Endothelial cell of umbilical vein (primary cell): ENCODE measurements at regions of chr5 and their contacts with region 1.

Region 1: DNA sequence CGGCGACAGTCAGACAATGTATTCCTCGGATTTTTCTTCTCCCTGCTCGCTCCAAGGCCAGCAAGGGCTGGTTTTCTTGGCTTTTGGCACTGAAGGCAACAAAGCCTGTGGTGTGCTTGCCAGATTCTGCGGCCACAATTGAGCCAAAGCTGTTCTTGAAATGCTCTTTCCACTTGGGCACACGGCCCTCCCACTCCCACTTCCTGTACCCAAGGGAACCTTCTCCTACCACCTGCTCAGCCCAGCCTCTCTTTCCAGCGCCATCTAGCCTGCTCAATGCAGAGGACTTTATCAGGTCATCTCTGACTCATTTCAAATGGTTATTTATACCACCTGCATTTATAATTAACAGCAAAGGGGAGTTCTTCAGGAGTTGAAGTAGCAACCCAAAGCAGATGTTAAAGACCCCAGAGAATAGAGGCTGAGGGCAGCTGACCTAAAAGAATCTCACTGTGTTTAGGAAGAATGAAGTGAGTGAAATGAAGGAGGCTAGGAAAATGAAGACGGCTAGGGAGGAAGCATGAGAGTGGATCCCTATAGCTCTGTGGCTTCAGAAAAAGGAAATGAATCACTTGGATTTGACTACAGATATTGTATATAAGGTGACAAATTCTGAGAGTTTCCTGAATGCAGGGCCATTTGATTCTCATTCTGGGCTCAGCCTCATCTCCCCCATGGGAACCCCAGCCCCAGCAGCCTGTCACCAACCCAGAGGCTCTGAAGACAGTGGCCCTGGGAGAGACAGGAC is 439.0 kb downstream of the ENC1 start:
- DNase-seq: peak; percentile 85
- H3K4me3 ChIP-seq: peak overlapping the region in 1 of 3 experiments; percentile 11
- H3K27ac ChIP-seq: peak overlapping the region; percentile 49
- H3K4me1 ChIP-seq: peaks cover 25% of the 10 kb centered on the region
- H3K27me3 ChIP-seq: peaks cover 0 to 5% of the 10 kb centered on the region in 2 experiments
- CTCF ChIP-seq: no peak
- POLR2A ChIP-seq: no peak

Region 2: DNA sequence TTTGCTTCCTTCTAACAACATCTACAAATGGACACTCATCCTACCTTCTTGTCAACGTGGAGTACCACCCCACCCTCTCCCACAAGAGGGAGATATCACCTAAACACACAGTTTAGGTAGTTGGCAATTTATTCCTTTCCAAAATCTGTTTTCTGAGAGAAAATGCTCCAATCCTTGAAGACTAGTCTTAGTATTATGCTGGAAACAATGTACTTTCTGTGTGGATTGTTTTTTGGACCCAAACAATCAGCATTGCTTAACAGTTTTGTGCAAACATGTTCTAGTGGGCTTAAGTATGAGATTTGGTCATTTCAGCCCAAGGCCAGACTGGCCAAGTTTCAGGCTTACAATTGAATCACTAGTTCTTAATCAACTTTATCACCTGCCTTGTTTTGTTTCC is 216.4 kb before region 1 on chr5:
- CTCF ChIA-PET with region 1: no interaction called
- POLR2A ChIA-PET with region 1: no interaction called
- dilution Hi-C with region 1: no loop called
- intact Hi-C with region 1: loop called (anchors 5 kb)
- DNase-seq: peak; percentile 59
- H3K4me3 ChIP-seq: no peak overlapping the region
- H3K27ac ChIP-seq: no peak overlapping the region
- H3K4me1 ChIP-seq: no peaks in the 10 kb centered on the region
- H3K27me3 ChIP-seq: peaks cover 11 to 20% of the 10 kb centered on the region in 2 experiments
- CTCF ChIP-seq: peak; percentile 22 to 41
- POLR2A ChIP-seq: no peak

Region 3: DNA sequence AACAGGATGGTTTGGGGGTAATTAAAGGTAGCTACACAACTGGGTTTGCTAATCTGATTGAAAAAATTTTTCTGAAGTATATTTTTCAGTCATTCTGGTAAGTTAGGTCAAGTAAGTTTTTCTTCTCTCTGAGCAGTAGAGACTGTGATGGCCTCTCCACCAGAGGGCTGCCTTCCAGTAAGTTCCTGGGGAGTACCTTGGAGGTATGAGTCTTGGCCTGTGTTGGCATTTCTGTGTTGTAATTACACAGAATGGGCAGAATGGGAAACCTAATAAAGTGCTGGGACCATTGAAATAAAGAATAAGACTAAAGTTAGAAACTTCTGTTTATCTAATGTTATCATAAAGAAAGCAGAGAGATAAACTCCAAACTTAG is 144.7 kb before region 1 on chr5:
- CTCF ChIA-PET with region 1: no interaction called
- POLR2A ChIA-PET with region 1: no interaction called
- dilution Hi-C with region 1: no loop called
- intact Hi-C with region 1: loop called (anchors 5 kb)
- DNase-seq: peak; percentile 64
- H3K4me3 ChIP-seq: no peak overlapping the region
- H3K27ac ChIP-seq: no peak overlapping the region
- H3K4me1 ChIP-seq: no peaks in the 10 kb centered on the region
- H3K27me3 ChIP-seq: no peaks in the 10 kb centered on the region
- CTCF ChIP-seq: peak; percentile 39 to 57
- POLR2A ChIP-seq: no peak

Region 4: DNA sequence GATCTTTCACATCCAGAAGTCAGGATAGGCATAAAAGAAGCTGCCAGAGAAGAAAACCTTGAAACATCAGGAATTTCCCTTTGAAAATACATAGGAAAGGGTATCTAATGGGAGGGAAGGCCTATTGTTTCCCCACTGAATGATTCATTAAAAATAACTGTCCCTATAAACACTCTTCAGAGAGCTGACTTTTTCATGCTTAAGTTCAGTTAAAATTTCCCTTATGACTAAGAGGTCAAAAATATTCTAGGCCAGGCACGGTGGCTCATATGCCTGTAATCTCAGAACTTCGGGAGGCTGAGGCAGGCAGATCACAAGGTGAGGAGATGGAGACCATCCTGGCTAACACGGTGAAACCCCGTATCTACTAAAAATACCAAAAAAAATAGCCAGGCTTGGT is 60.5 kb before region 1 on chr5:
- CTCF ChIA-PET with region 1: interaction called, 3 read pairs
- POLR2A ChIA-PET with region 1: no interaction called
- dilution Hi-C with region 1: no loop called
- intact Hi-C with region 1: loop called (anchors 5 kb)
- DNase-seq: peak; percentile 89
- H3K4me3 ChIP-seq: no peak overlapping the region
- H3K27ac ChIP-seq: peak overlapping the region; percentile 52
- H3K4me1 ChIP-seq: peaks cover 9% of the 10 kb centered on the region
- H3K27me3 ChIP-seq: no peaks in the 10 kb centered on the region
- CTCF ChIP-seq: no peak
- POLR2A ChIP-seq: no peak